ENCODE measurements at regions of chr19 and their contacts with region 1.

Region 1: GRCh38 chr19:54179921-54180461 is 7.0 kb upstream of the TMC4 start:
- DNase-seq: no peak
- ATAC-seq: peak; percentile 20

Region 2: GRCh38 chr19:54115109-54116063 is 64.6 kb before region 1 on chr19 and contains the starts of genes PRPF31 and TFPT:
- intact Hi-C with region 1: no loop called
- DNase-seq: peak; percentile 96
- ATAC-seq: peak; percentile 95
- total RNA-seq, gene PRPF31: 43.2 TPM
- total RNA-seq, gene TFPT: 14.3 TPM

Region 3: GRCh38 chr19:54231077-54231931 is 51.3 kb after region 1 on chr19:
- intact Hi-C with region 1: loop called (anchors 10 kb)
- DNase-seq: peak; percentile 91
- ATAC-seq: peak; percentile 97